CD4-positive, alpha-beta memory T cell (primary cell): ENCODE measurements at regions of chr1 and their contacts with region 1.

Region 1: GRCh38 chr1:42576935-42577334 is 81.3 kb upstream of the PPIH start:
- DNase-seq: no peak
- H3K4me3 ChIP-seq: no peak overlapping the region
- H3K4me3 Mint-ChIP-seq: no peak overlapping the region
- H3K27ac ChIP-seq: no peak overlapping the region
- H3K27ac Mint-ChIP-seq: no peak overlapping the region
- H3K4me1 ChIP-seq: no peaks in the 10 kb centered on the region
- H3K4me1 Mint-ChIP-seq: no peaks in the 10 kb centered on the region
- H3K27me3 ChIP-seq: no peaks in the 10 kb centered on the region
- H3K27me3 Mint-ChIP-seq: no peaks in the 10 kb centered on the region

Region 2: GRCh38 chr1:42319128-42319851 is 257.6 kb before region 1 on chr1:
- CTCF ChIA-PET with region 1: no interaction called
- POLR2A ChIA-PET with region 1: no interaction called
- intact Hi-C with region 1: loop called (anchors 10 kb)
- DNase-seq: peak in 3 of 5 donors; percentile 5 to 59 (median 23)
- H3K4me3 ChIP-seq: peak overlapping the region in 1 of 2 donors; percentile 6
- H3K4me3 Mint-ChIP-seq: peak overlapping the region; percentile 73 to 92 (median 82)
- H3K27ac ChIP-seq: peak overlapping the region; percentile 51
- H3K27ac Mint-ChIP-seq: peak overlapping the region; percentile 85 to 94 (median 91)
- H3K4me1 ChIP-seq: peaks cover 92% of the 10 kb centered on the region
- H3K4me1 Mint-ChIP-seq: peaks cover 73 to 95% (median 88%) of the 10 kb centered on the region in 4 donors
- H3K27me3 ChIP-seq: no peaks in the 10 kb centered on the region
- H3K27me3 Mint-ChIP-seq: no peaks in the 10 kb centered on the region

Region 3: DNA sequence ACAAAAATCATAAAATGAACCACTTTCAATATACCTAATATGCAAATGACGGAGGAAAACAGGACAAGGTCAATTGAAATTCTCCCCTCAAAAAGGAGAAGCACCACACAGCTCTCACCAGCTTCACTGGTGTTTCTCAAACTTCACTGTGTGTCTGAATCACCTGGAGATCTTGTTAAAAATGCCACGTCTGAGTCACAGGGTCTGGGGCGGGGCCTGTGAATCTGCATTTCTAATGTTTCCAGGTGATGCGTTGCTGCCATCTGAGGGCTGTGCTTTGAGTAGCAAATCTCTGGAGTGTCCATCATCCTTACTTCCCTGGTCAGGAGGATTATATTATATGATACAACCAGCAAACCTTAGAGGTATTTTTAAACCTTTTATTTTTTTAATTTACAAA is 154.1 kb after region 1 on chr1:
- CTCF ChIA-PET with region 1: interaction called, 3 read pairs
- POLR2A ChIA-PET with region 1: no interaction called
- intact Hi-C with region 1: loop called (anchors 5 kb)
- DNase-seq: no peak
- H3K4me3 ChIP-seq: no peak overlapping the region
- H3K4me3 Mint-ChIP-seq: no peak overlapping the region
- H3K27ac ChIP-seq: no peak overlapping the region
- H3K27ac Mint-ChIP-seq: no peak overlapping the region
- H3K4me1 ChIP-seq: no peaks in the 10 kb centered on the region
- H3K4me1 Mint-ChIP-seq: peaks cover 0 to under 1% (median 0%) of the 10 kb centered on the region in 4 donors
- H3K27me3 ChIP-seq: no peaks in the 10 kb centered on the region
- H3K27me3 Mint-ChIP-seq: peaks cover 0 to 2% of the 10 kb centered on the region in 2 donors

Region 4: DNA sequence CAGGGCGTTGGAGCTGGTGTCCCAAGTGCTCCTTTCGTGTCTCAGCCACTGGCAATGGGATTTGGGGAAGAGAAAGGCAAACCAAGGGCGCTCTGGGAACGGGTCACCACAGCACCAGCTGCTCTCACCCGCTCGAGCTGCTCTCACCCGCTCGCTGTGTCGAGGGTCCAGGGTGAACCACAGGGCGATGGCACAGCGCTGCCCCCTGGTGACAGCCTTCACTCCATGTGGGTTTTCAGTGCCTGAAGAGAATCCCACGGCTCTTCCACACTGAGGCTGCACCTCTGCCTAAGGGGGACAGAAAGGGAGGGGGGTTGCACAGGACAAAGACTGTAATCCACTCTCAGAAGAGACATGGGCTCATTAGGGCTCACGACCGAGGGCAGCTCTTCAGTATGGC is 170.2 kb after region 1 on chr1:
- CTCF ChIA-PET with region 1: interaction called, 34 read pairs
- POLR2A ChIA-PET with region 1: no interaction called
- intact Hi-C with region 1: loop called (anchors 1 kb)
- DNase-seq: peak in 4 of 5 donors; percentile 17 to 38 (median 33)
- H3K4me3 ChIP-seq: no peak overlapping the region
- H3K4me3 Mint-ChIP-seq: no peak overlapping the region
- H3K27ac ChIP-seq: no peak overlapping the region
- H3K27ac Mint-ChIP-seq: no peak overlapping the region
- H3K4me1 ChIP-seq: no peaks in the 10 kb centered on the region
- H3K4me1 Mint-ChIP-seq: no peaks in the 10 kb centered on the region
- H3K27me3 ChIP-seq: no peaks in the 10 kb centered on the region
- H3K27me3 Mint-ChIP-seq: no peaks in the 10 kb centered on the region